ENCODE measurements at regions of chr18 and their contacts with region 1.

Region 1: DNA sequence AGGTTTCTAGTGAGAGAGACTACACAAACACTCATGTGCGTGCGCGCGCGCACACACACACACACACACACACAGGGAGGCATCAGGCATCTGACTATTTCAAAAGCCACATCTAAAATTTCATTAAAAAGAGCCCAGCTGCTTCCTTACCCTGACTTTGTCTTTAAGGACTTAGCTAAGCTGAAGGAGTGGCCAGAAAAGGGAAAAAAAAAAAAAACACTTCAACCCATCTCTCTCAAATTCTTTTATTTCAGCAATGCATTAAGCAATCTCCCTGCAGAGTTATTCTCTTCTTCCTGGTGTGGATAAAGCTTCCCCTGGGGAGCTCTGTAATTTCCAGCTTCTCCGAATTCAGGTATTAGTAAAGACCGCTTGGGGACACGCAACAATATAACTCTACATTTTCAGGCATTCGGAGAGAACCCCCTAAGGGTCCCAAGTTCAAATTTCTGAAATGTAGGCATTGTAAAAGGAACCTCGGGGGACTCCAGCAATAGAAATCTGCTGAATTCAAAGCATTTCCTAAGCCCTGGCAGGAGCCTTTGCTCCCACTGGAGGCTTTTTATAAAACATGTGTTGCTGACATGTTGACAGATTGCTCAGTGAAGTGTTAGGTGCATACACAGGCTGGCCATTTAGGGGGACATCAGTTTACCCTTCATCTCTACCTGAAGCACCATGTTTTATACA is 67.0 kb downstream of the ZNF521 start:
- DNase-seq: no peak

Region 2: GRCh38 chr18:25230658-25231326 is 54.2 kb before region 1 on chr18:
- intact Hi-C with region 1: loop called (anchors 5 kb)
- DNase-seq: peak; percentile 85

Region 3: DNA sequence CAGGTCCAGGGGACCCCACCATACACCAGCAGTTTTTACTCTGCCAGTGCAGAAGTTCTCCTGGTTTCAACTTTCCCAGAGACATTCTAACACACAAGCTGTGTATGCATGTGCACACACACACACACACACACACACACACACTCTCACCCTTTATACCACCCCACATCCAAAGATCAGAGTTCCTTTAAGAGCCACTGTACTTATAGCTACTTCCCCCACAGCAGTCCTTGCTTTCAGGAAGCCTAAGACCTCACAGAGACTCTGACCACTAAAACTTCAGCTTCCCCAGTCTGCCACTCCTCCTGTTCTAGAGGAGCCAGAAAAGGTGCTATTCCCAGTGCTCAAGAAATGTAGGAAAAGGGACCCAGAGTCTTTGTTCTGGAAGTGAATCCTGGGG is 40.8 kb before region 1 on chr18:
- intact Hi-C with region 1: no loop called
- DNase-seq: no peak

Region 4: GRCh38 chr18:25341831-25342230 is 56.8 kb after region 1 on chr18:
- intact Hi-C with region 1: no loop called
- DNase-seq: no peak

Region 5: DNA sequence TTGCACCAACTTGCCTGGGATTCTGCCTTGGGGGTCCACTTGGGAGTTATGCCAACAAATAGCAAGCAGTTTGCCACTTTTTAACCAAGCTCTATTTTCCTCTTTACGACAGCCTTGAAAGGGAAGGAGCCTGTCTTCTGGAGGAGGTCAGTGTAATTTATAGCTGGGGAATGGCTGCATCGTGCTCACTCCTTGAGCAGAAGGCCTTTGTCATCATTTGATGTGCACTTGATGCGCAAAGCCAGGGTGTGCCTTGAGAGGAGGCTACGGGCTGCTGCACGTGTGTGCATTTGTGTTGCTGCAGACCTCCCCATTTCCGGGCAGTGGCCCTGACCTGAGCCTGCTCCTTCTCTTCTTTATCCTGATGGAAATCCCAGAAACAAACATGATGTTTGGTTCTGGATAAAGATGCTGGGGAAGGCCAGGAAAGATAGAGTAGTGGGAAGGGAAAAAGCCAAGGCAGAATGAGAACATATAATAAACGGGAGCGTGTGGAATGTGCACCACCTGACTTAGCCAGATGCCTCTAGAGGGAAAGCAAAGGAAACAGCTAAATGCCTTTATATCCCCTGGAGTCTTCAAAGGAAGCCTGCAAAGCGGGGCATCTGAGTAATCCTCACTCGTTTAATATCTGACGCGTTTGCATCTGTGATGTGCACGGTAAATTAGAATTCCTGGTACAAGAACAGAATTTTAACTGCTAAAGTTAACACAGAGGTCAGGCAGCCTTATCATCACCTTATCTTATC is 135.2 kb after region 1 on chr18:
- intact Hi-C with region 1: no loop called
- DNase-seq: no peak

Measured in cardiac septum (tissue), 1 donor.